Transverse colon (tissue), 4 donors: ENCODE measurements at regions of chr1 and their contacts with region 1.

Region 1: DNA sequence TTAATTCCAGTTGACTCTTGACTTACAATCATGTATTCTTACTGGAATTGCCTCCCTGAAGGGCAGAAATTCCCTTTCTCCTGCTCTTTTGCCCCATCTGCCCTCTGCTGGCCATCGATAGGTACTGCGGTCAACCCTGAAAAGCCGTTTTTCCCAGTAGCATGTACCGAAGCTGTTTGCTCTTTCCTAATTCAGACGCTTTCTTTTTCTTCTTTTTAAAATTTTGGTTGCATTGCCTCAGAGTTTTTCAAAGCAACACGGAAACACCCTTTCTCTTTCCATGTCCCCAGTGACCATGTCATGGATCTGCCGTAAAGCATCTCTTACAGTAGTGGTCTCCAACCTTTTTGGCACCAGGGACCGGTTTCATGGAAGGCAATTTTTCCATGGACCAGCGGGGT is 164.2 kb upstream of the C1orf21 start:
- DNase-seq: peak; percentile 59
- H3K4me3 ChIP-seq: no peak overlapping the region
- H3K27ac ChIP-seq: no peak overlapping the region
- H3K4me1 ChIP-seq: peaks cover 0 to 4% (median 0%) of the 10 kb centered on the region in 4 donors
- H3K27me3 ChIP-seq: no peaks in the 10 kb centered on the region
- CTCF ChIP-seq: peak; percentile 88 to 94 (median 93)
- EP300 ChIP-seq: no peak
- POLR2A ChIP-seq: no peak

Region 2: DNA sequence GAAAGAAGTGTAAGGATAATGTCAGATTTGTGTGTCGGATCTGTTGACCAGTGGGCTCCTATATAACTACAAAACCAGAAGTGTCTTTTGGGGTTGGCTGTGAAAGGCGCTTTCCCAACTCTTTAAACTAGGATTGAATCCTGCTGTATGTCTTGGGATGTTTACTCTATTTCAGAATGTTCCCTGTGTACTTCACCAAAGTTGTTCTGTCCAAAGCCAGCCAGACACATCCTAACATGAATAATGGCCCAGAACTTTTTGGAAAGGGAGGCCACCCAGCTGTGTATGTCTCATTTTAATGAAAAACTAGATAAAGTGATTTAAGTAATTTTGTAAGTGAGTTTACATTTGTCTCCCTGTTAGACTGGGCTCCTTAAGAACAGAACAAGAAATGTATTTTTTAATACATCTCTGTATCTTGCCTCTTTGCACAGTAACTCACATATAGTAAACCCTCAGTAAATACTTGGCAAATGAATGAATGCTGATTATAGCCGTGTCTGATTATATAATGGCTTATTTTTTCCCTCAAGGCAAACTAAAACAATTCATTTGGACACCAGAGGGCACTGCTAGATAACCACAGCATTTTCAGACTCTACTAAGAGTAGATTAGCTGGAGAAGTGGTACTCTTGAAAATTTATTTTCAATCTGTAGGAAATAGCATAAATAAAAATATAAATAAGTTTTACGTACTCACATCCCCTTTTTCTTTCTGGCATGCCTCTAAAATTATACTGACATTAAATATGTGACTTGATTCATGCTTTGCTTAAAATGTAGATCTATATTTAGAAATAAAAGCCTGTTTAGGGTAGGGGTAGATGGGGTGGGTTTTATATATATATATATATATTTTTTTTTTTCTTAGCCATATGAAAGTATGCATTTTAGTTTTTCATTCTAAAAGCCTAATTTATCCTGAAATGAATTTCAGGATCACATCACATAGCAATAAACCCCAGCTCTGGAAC is 147.3 kb before region 1 on chr1:
- in situ Hi-C with region 1: loop called in 3 of 4 experiments (anchors 5 to 25 kb)
- intact Hi-C with region 1: loop called (anchors 10 kb)
- DNase-seq: peak; percentile 15
- H3K4me3 ChIP-seq: no peak overlapping the region
- H3K27ac ChIP-seq: peak overlapping the region; percentile 7 to 54 (median 23)
- H3K4me1 ChIP-seq: peaks cover 0 to 14% (median 0%) of the 10 kb centered on the region in 4 donors
- H3K27me3 ChIP-seq: no peaks in the 10 kb centered on the region
- CTCF ChIP-seq: peak; percentile 67 to 77 (median 68)
- EP300 ChIP-seq: no peak
- POLR2A ChIP-seq: no peak

Region 3: DNA sequence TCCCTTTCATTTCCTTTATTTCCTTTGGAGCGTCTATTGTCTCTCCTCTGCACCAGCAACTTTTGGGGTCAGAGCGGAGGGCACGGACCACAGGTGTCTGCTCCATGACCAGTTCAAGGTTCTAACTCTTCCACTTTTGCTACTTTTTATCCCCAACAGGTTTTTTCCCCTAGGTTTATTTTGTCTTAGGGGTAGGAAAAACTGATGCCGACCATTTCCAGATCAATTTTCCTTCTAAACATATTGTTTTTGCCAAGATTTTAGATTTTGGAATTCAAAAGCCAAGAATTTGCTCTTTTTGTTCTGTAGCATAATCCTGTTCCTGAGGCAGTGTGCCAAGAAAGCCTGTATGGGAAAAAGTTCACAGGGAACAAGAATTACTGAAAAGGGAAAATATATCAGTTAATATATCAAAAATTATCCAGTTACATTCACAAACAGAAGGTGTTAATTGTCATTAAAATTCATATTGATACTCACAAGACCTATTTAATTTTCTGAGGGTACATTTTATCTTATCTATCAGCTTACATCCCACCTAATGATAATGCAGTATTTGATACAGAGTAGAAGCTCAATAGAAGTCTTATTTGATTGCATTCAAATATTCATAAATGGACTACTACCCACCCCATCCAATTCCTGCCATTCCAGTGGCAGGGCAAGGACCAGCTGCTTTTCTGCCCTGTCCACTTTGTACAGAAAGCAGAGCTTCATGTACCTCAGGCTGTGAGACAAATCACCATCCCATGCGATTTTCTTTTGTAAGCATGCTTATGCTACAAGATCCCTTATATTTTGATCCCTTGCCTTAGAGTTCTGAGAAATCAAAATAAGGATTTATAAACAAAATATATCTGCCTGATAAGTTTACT is 139.9 kb before region 1 on chr1:
- in situ Hi-C with region 1: loop called in 3 of 4 experiments (anchors 5 to 25 kb)
- intact Hi-C with region 1: loop called (anchors 10 kb)
- DNase-seq: no peak
- H3K4me3 ChIP-seq: no peak overlapping the region
- H3K27ac ChIP-seq: no peak overlapping the region
- H3K4me1 ChIP-seq: no peaks in the 10 kb centered on the region
- H3K27me3 ChIP-seq: no peaks in the 10 kb centered on the region
- CTCF ChIP-seq: no peak
- EP300 ChIP-seq: no peak
- POLR2A ChIP-seq: no peak

Region 4: GRCh38 chr1:184664042-184664655 is 441.5 kb after region 1 on chr1:
- in situ Hi-C with region 1: loop called in 3 of 4 experiments (anchors 25 kb)
- intact Hi-C with region 1: no loop called
- DNase-seq: peak; percentile 79
- H3K4me3 ChIP-seq: peak overlapping the region in 3 of 4 donors; percentile 24 to 46 (median 26)
- H3K27ac ChIP-seq: peak overlapping the region in 1 of 4 donors; percentile 20
- H3K4me1 ChIP-seq: peaks cover 7 to 21% (median 11%) of the 10 kb centered on the region in 4 donors
- H3K27me3 ChIP-seq: no peaks in the 10 kb centered on the region
- CTCF ChIP-seq: peak; percentile 88 to 97 (median 93)
- EP300 ChIP-seq: no peak
- POLR2A ChIP-seq: no peak

Region 5: DNA sequence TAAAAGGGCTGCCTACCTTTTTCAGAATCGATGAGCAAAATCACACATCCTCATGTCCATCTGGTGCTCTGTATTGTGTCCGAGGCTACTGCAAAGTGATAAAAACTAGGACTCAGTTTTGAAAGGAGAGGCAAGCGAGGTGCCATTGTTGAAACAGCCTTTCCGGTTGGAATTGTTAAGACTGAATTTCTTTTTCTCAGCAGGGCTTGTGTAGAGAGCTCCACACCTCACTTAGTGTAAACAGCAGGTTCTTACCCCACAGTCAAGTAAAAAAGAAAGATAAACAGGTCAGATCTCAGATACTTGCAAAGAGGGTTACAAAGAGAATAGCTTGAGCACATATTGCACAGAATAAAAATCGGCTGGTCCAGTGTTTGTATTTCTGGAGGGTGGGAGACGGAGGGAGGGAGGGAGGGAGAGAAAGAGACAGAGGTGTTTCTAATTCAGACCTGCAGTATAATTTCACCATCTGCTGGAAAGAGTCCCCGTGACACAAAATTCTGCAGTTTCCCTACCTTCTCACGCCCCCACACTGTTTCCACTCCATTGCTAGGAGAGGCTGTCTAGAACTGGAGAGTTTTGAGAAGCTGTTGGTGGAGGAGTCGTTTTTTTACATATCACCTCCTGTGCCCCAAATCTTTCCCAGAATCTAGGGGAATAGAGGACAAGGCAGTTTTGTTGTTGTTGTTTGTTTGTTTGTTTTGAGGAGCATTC is 449.5 kb after region 1 on chr1:
- in situ Hi-C with region 1: loop called in 3 of 4 experiments (anchors 25 kb)
- intact Hi-C with region 1: loop called (anchors 5 kb)
- DNase-seq: no peak
- H3K4me3 ChIP-seq: no peak overlapping the region
- H3K27ac ChIP-seq: no peak overlapping the region
- H3K4me1 ChIP-seq: no peaks in the 10 kb centered on the region
- H3K27me3 ChIP-seq: no peaks in the 10 kb centered on the region
- CTCF ChIP-seq: no peak
- EP300 ChIP-seq: no peak
- POLR2A ChIP-seq: no peak

Region 6: GRCh38 chr1:185404291-185404690 is 1181.6 kb after region 1 on chr1:
- in situ Hi-C with region 1: no loop called
- intact Hi-C with region 1: no loop called
- DNase-seq: no peak
- H3K4me3 ChIP-seq: peak overlapping the region in 1 of 4 donors; percentile 24
- H3K27ac ChIP-seq: peak overlapping the region in 1 of 4 donors; percentile 8
- H3K4me1 ChIP-seq: peaks cover 0 to 9% (median 0%) of the 10 kb centered on the region in 4 donors
- H3K27me3 ChIP-seq: no peaks in the 10 kb centered on the region
- CTCF ChIP-seq: no peak
- EP300 ChIP-seq: no peak
- POLR2A ChIP-seq: no peak